ENCODE measurements at regions of chr3 and their contacts with region 1.

Region 1: DNA sequence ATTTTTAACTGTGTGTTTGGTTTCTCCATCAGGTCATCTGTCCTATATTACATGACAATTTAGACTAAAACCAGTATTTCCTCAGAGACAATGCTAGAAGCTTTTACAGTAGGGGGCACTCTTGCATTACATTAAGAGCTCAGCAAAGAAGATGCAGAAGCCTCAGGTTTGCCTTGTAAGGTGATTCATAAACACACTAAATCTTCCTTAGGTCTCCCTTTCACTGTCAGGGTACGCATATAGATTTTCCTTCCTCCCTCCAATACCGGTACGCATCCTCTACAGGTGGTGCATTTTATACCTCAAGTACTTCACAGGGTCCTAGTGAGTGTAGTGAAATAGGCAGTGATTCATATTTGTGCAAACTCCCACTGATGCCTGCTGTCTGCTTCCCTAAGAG is 46.5 kb downstream of the CD86 start:
- DNase-seq: peak in 2 of 5 donors; percentile 47 to 51
- H3K4me3 ChIP-seq: no peak overlapping the region
- H3K4me3 Mint-ChIP-seq: no peak overlapping the region
- H3K27ac ChIP-seq: no peak overlapping the region
- H3K27ac Mint-ChIP-seq: no peak overlapping the region
- H3K4me1 ChIP-seq: peaks cover 5% of the 10 kb centered on the region
- H3K4me1 Mint-ChIP-seq: peaks cover 15 to 20% (median 16%) of the 10 kb centered on the region in 3 donors
- H3K27me3 ChIP-seq: no peaks in the 10 kb centered on the region
- H3K27me3 Mint-ChIP-seq: no peaks in the 10 kb centered on the region

Region 2: GRCh38 chr3:122111974-122112373 is 10.3 kb after region 1 on chr3:
- CTCF ChIA-PET with region 1: interaction called, 10 read pairs
- POLR2A ChIA-PET with region 1: no interaction called
- DNase-seq: no peak
- H3K4me3 ChIP-seq: no peak overlapping the region
- H3K4me3 Mint-ChIP-seq: no peak overlapping the region
- H3K27ac ChIP-seq: no peak overlapping the region
- H3K27ac Mint-ChIP-seq: no peak overlapping the region
- H3K4me1 ChIP-seq: no peaks in the 10 kb centered on the region
- H3K4me1 Mint-ChIP-seq: no peaks in the 10 kb centered on the region
- H3K27me3 ChIP-seq: no peaks in the 10 kb centered on the region
- H3K27me3 Mint-ChIP-seq: peaks cover 3 to 17% of the 10 kb centered on the region in 2 donors